Mammary epithelial cell (primary cell): ENCODE measurements at regions of chr1 and their contacts with region 1.

Region 1: DNA sequence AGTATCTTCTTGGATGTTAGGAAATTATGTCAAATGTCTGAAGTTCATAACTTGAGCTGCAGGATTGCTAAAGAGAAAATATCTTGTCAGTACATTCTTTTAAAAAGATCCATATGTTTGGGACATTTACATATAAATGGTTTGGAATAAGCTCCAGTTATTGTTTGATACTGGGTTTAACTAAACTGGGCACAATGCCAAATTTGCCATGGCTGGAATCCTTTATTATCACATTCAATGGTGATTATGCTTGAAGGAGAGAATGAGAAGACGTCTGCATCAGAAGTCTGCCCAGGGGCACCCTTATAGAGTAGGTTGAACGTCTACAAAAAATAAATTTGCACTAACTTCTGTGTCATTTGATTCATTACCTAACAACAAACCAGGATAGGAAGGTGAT is 652.5 kb downstream of the AMY1C start:
- DNase-seq: no peak
- H3K4me3 ChIP-seq: no peak overlapping the region
- H3K27ac ChIP-seq: no peak overlapping the region
- H3K4me1 ChIP-seq: no peaks in the 10 kb centered on the region
- H3K27me3 ChIP-seq: no peaks in the 10 kb centered on the region
- CTCF ChIP-seq: no peak

Region 2: DNA sequence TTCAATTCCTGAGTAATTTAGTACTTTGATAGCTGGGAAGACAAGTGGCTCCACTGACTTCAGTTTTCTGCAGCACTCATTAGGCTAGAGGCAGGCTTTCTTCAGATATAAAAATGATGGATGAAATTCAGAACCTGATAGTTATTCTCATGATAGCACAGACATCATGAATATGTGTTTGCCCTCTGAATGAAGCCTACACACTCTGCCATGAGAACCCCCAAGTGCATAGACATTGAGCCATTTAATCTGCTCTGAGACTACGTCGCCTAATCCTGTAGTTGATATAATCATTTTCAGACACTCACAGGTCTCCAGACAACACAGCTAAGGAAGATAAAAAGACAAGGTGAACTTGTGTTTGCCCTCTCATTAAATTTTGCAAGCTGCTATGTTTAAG is 86.4 kb before region 1 on chr1:
- CTCF ChIA-PET with region 1: no interaction called
- dilution Hi-C with region 1: no loop called
- in situ Hi-C with region 1: loop called in 1 of 2 experiments (anchors 25 kb)
- intact Hi-C with region 1: no loop called
- DNase-seq: no peak
- H3K4me3 ChIP-seq: no peak overlapping the region
- H3K27ac ChIP-seq: no peak overlapping the region
- H3K4me1 ChIP-seq: no peaks in the 10 kb centered on the region
- H3K27me3 ChIP-seq: no peaks in the 10 kb centered on the region
- CTCF ChIP-seq: no peak

Region 3: GRCh38 chr1:104459886-104460285 is 57.7 kb after region 1 on chr1:
- CTCF ChIA-PET with region 1: no interaction called
- dilution Hi-C with region 1: no loop called
- in situ Hi-C with region 1: no loop called
- intact Hi-C with region 1: no loop called
- DNase-seq: no peak
- H3K4me3 ChIP-seq: no peak overlapping the region
- H3K27ac ChIP-seq: no peak overlapping the region
- H3K4me1 ChIP-seq: no peaks in the 10 kb centered on the region
- H3K27me3 ChIP-seq: no peaks in the 10 kb centered on the region
- CTCF ChIP-seq: no peak

Region 4: GRCh38 chr1:104592926-104593325 is 190.7 kb after region 1 on chr1:
- CTCF ChIA-PET with region 1: no interaction called
- dilution Hi-C with region 1: no loop called
- in situ Hi-C with region 1: no loop called
- intact Hi-C with region 1: no loop called
- DNase-seq: no peak
- H3K4me3 ChIP-seq: no peak overlapping the region
- H3K27ac ChIP-seq: no peak overlapping the region
- H3K4me1 ChIP-seq: no peaks in the 10 kb centered on the region
- H3K27me3 ChIP-seq: no peaks in the 10 kb centered on the region
- CTCF ChIP-seq: no peak